Activated CD4-positive, alpha-beta memory T cell treated with anti-CD3 and anti-CD28 coated beads for 36 hours (primary cell): ENCODE measurements at regions of chr21 and their contacts with region 1.

Region 1: GRCh38 chr21:44510508-44511210 is 29.3 kb downstream of the KRTAP10-1 start:
- DNase-seq: peak; percentile 82
- H3K4me3 Mint-ChIP-seq: no peak overlapping the region
- H3K27ac Mint-ChIP-seq: no peak overlapping the region
- H3K4me1 Mint-ChIP-seq: no peaks in the 10 kb centered on the region
- H3K27me3 Mint-ChIP-seq: no peaks in the 10 kb centered on the region

Region 2: GRCh38 chr21:43884012-43884860 is 626.4 kb before region 1 on chr21:
- CTCF ChIA-PET with region 1: no interaction called
- POLR2A ChIA-PET with region 1: no interaction called
- intact Hi-C with region 1: no loop called
- DNase-seq: peak; percentile 52
- H3K4me3 Mint-ChIP-seq: no peak overlapping the region
- H3K27ac Mint-ChIP-seq: peak overlapping the region; percentile 23
- H3K4me1 Mint-ChIP-seq: peaks cover 74% of the 10 kb centered on the region
- H3K27me3 Mint-ChIP-seq: no peaks in the 10 kb centered on the region

Region 3: GRCh38 chr21:44742418-44743153 is 231.9 kb after region 1 on chr21:
- CTCF ChIA-PET with region 1: interaction called, 35 read pairs
- POLR2A ChIA-PET with region 1: no interaction called
- intact Hi-C with region 1: loop called (anchors 1 kb)
- DNase-seq: no peak
- H3K4me3 Mint-ChIP-seq: no peak overlapping the region
- H3K27ac Mint-ChIP-seq: no peak overlapping the region
- H3K4me1 Mint-ChIP-seq: peaks cover 5% of the 10 kb centered on the region
- H3K27me3 Mint-ChIP-seq: peaks cover 3% of the 10 kb centered on the region

Region 4: DNA sequence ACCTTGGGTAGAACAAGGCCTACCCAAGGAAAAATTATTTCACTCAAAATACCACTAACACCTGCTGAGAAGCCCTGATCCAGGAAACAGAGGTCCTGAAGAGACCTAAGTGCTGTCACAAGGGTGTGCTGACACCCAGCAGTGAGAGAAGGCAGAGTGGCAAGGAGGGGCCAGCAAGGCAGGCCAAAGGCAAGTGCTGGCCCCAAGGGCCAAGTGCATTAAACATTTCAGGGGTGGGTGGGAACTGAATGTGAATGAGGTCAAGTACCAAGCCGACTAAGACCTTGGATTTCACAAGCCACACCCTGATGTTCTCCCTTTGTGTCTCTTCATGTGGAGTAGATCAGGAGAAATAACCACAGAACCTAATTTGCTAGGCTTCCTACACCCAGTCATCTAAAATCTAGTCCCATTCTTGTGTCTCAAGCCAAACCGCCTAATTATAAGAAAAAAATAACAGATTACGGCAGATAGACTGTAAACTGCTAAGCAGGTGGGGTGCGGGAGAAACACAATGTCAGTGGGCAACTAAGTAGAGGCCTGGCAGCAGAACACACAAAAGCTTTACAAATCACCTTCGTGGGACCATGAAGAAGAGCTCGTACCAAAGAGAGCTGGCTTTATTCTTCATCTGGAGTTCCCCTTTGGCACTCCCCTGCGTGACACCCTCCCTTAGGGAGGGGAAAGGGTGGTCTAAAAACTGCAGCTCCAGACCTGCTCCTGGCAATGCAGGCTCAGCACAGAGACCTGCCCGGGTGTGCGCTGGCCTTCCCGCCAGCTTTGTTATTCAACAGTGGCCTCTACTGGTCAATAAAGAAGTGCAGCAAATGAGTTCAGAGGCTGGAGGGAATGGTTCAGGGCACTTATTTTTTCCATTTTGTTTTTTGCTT is 282.3 kb after region 1 on chr21:
- CTCF ChIA-PET with region 1: interaction called, 67 read pairs
- POLR2A ChIA-PET with region 1: no interaction called
- intact Hi-C with region 1: loop called (anchors 1 kb)
- DNase-seq: peak; percentile 61
- H3K4me3 Mint-ChIP-seq: no peak overlapping the region
- H3K27ac Mint-ChIP-seq: peak overlapping the region; percentile 18
- H3K4me1 Mint-ChIP-seq: peaks cover 62% of the 10 kb centered on the region
- H3K27me3 Mint-ChIP-seq: no peaks in the 10 kb centered on the region